Transverse colon (tissue), 4 donors: ENCODE measurements at regions of chr5 and their contacts with region 1.

Region 1: DNA sequence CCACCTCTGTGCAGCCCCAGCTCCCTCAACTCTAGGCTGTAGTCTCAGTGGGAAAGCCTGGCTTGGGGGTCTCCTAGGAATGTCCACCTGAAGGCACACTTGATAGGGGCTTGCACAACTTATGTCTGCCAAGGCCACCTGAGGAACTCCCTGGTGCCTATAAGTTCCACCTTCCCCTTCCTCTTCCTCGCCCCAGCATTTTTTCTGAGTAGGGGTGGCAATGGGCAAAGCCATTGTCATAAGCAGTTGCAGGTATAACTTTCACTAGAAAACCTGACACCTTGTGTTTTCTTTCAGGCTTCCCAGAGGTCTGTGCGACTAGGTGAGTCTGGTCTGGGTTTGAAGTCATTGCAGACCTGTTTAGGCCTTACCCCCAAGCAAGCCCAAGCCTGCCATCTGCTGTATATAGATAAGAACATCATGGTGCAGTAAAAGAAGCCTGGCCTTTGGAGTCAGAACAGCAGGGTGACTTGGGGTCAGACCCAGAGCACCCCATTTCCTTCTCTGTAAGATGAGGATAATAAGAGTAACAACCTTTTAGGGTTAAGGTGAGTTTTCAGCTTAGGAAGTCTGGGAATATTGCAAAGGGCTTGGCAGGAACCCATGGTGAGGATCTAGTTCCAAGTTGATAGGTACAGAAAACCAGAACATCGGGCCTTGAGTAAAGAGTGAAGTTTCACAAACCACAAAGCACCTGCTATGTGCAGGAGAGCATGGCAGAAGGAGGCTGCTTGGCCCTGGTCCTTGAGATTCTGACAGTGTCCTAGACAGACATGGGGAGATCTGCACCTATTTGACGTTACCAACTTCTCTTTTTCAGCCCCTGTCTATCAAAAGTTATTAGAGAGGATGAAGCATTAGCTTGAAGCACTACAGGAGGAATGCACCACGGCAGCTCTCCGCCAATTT is 33.8 kb downstream of the TGFBI start:
- DNase-seq: no peak
- H3K4me3 ChIP-seq: no peak overlapping the region
- H3K27ac ChIP-seq: no peak overlapping the region
- H3K4me1 ChIP-seq: peaks cover 4 to 27% (median 16%) of the 10 kb centered on the region in 4 donors
- H3K27me3 ChIP-seq: no peaks in the 10 kb centered on the region
- CTCF ChIP-seq: peak; percentile 39 to 56 (median 49)
- EP300 ChIP-seq: no peak
- POLR2A ChIP-seq: no peak

Region 2: DNA sequence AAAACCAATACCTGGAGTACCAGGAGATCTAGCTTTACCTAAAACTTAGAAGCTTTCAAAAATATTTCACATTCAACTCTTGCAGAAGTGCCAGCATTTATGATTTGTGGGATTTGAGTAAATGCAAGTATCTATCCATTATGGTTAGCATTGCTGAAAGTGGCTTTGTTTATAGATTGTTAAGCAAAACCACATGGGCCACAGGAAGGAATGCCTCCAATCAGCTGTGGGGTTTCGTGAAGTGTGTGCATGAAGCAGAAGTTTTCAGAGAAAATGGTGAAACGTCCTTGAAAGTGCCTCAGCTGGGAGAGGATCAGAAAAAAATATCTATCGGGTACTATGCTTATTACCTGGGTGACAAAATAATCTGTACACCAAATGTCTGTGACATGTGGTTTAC is 112.0 kb before region 1 on chr5:
- in situ Hi-C with region 1: loop called in 2 of 4 experiments (anchors 10 to 25 kb)
- intact Hi-C with region 1: loop called (anchors 10 kb)
- DNase-seq: no peak
- H3K4me3 ChIP-seq: no peak overlapping the region
- H3K27ac ChIP-seq: no peak overlapping the region
- H3K4me1 ChIP-seq: no peaks in the 10 kb centered on the region
- H3K27me3 ChIP-seq: no peaks in the 10 kb centered on the region
- CTCF ChIP-seq: no peak
- EP300 ChIP-seq: no peak
- POLR2A ChIP-seq: no peak

Region 3: DNA sequence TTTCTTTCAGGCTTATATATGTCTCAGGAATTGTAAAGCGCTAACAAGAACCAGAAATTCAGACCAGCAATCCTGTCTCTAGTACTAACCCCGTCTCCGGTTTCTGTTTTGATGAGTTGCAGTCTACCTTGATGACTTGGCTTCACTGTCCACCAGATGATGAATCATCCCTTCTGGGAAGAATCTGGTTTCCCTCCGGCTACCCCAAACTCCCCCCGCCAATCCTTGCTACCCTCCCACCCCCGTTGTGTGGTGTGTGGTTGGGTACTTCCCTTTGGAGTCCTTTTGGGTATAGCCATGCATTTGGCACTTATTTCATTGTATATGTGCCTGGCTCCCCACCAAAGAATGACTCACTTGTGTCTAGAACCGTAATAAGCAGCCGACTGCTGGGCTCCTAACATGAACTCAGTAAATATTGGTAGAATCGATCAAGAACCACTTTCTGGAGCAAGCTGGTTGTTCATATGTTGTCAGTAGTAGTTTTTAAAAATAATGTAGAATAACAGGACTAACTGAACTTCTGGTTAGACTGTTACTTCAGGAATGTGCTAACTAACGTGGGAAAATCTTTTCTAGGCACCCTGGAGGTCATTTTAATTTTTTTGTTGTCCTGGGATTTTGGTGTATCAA is 42.1 kb before region 1 on chr5:
- in situ Hi-C with region 1: no loop called
- intact Hi-C with region 1: loop called (anchors 5 kb)
- DNase-seq: peak; percentile 14
- H3K4me3 ChIP-seq: no peak overlapping the region
- H3K27ac ChIP-seq: peak overlapping the region; percentile 57 to 71 (median 64)
- H3K4me1 ChIP-seq: peaks cover 3 to 18% (median 13%) of the 10 kb centered on the region in 4 donors
- H3K27me3 ChIP-seq: no peaks in the 10 kb centered on the region
- CTCF ChIP-seq: no peak
- EP300 ChIP-seq: no peak
- POLR2A ChIP-seq: no peak

Region 4: GRCh38 chr5:136605638-136606037 is 543.0 kb after region 1 on chr5:
- in situ Hi-C with region 1: no loop called
- intact Hi-C with region 1: no loop called
- DNase-seq: no peak
- H3K4me3 ChIP-seq: no peak overlapping the region
- H3K27ac ChIP-seq: no peak overlapping the region
- H3K4me1 ChIP-seq: no peaks in the 10 kb centered on the region
- H3K27me3 ChIP-seq: no peaks in the 10 kb centered on the region
- CTCF ChIP-seq: no peak
- EP300 ChIP-seq: no peak
- POLR2A ChIP-seq: no peak